ENCODE measurements at regions of chr6 and their contacts with region 1.

Region 1: DNA sequence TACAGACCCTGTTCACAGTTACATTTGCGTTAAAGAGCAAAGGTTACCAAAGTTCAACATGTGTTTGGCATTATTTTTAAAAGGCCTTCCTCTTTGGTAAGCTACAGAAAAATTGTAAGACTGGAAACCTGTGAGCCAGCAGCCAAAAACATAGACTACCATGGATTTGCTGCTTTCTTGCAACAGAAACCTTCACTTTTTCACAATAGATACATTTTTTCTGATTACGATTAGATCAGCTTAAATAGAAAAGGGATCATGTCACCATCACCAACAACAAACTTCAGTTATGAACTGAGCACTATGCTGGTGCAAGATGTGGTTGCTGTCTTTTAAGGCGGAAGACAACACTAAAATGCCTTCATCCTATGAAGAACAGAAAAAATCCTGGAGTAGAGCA is 112.3 kb upstream of the MARCKS start:
- DNase-seq: no peak
- H3K27ac ChIP-seq: no peak overlapping the region
- CTCF ChIP-seq: no peak

Region 2: GRCh38 chr6:113306552-113307145 is 438.2 kb before region 1 on chr6:
- CTCF ChIA-PET with region 1: no interaction called
- POLR2A ChIA-PET with region 1: interaction called, 11 read pairs
- DNase-seq: peak; percentile 23
- H3K27ac ChIP-seq: no peak overlapping the region
- CTCF ChIP-seq: peak; percentile 16; the same call in 1 of the 2 replicates

Region 3: DNA sequence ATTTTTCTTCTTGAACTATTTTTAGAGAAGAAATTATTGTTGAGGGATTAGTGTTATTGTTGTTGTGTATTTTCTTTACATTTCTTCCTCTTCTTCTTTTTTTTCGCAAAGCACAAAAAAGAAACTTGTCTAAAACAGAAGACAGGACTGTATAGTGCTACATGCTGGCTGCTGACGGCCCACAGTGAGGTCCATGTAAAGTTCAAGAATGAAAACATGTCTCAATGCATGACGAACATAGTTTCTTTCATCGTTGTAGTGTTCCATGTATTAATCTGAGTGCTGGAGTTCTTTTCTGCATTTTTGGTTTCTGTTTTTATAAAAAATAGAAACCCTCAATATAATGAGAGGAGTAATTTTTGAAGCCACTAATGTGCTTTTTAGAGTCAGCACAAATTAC is 350.6 kb before region 1 on chr6:
- CTCF ChIA-PET with region 1: no interaction called
- POLR2A ChIA-PET with region 1: no interaction called
- DNase-seq: no peak
- H3K27ac ChIP-seq: no peak overlapping the region
- CTCF ChIP-seq: no peak

Region 4: DNA sequence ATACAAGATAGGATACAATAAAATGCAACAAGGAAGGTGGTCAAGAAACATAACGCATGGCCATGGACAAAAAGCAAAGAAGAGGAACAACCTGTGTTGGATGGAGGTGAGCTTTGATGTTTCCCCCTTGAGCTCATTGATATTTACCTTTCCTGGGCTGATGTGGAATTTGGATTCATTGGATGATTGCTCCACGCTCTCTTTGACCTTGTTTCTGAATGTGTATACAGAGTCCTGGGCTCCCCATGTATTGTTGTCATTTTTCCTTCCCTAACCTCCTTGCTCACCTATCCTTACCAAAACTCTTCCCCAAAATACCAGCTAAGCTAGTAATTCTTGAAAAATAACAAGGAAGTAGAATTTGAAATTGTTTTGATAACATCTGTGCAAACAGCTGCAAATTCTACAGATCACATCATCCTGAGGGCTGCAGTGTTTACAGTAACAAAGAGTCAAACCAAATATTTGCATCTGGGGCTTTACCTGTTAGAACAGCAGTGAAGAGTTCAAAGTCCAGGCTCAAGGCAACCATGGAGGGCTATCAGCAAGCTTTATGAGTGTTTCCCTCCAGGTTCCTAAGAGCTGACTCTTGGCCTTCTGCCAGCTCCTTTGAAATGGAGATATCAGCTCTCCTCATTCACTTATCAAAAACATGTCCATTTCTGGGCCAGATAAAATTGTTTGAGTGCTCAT is 102.0 kb before region 1 on chr6:
- CTCF ChIA-PET with region 1: no interaction called
- POLR2A ChIA-PET with region 1: interaction called, 12 read pairs
- DNase-seq: no peak
- H3K27ac ChIP-seq: no peak overlapping the region
- CTCF ChIP-seq: no peak

Region 5: DNA sequence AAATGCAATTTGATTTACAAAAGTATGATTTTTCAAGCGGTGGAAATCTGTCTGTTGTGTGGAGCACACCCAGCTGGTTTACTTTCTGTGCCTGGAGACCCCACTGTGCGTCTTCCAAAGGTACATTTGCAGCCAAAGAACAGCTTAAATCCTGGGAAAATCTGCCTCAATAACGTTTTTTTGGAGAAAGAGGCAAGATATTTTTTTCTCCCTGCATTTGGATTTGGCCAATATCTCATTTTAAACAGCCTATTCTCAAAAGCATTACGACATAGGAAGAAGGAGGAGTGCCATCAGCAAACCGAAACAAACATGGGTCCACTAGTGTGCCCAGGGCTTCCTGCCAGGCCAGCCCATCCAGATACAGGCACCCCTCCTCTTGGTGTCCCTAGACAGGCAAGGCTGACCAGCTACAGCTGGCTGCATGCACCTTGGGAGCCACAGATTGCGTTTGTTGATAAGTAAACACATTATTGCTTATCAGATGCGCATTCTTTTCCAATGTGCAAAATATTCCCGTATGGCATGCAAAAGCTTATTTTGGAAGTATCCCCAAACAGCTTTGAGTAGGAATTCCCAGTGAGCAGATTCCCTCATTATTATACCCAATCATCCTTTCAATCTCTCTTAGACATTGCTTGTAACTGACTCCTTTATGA is 72.2 kb before region 1 on chr6:
- CTCF ChIA-PET with region 1: no interaction called
- POLR2A ChIA-PET with region 1: no interaction called
- DNase-seq: no peak
- H3K27ac ChIP-seq: no peak overlapping the region
- CTCF ChIP-seq: no peak

Region 6: GRCh38 chr6:114690625-114691024 is 945.8 kb after region 1 on chr6:
- CTCF ChIA-PET with region 1: no interaction called
- POLR2A ChIA-PET with region 1: no interaction called
- DNase-seq: no peak
- H3K27ac ChIP-seq: no peak overlapping the region
- CTCF ChIP-seq: no peak